ENCODE measurements at regions of chrX and their contacts with region 1.

Region 1: GRCh38 chrX:17689971-17690409 is 47.3 kb upstream of the SCML1 start:
- DNase-seq: peak; percentile 66
- H3K4me3 ChIP-seq: no peak overlapping the region
- H3K27ac ChIP-seq: no peak overlapping the region
- H3K4me1 ChIP-seq: peaks cover 2% of the 10 kb centered on the region
- H3K27me3 ChIP-seq: no peaks in the 10 kb centered on the region
- CTCF ChIP-seq: peak; percentile 38 to 49
- POLR2A ChIP-seq: no peak

Region 2: DNA sequence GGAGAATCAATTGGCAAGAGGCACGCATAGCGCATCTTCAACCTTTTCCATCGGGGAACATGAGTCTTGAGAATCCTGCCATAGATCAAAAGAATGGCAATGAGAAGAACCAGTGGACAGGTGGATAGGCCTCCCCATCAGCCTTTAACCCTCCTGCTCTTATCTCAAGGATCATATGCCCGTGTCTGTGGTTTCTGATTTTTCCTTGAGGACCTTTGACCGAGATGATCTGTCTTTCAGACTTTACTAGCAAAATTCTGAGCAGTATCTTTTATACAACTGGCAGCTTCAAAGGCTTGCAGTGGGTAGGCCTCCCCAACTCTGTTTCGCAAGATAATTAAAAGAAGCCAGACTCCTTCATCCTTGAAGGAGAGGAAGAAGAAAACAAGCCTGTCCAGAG is 569.2 kb before region 1 on chrX:
- CTCF ChIA-PET with region 1: no interaction called
- POLR2A ChIA-PET with region 1: no interaction called
- dilution Hi-C with region 1: no loop called
- intact Hi-C with region 1: loop called (anchors 10 kb)
- DNase-seq: no peak
- H3K4me3 ChIP-seq: no peak overlapping the region
- H3K27ac ChIP-seq: no peak overlapping the region
- H3K4me1 ChIP-seq: no peaks in the 10 kb centered on the region
- H3K27me3 ChIP-seq: no peaks in the 10 kb centered on the region
- CTCF ChIP-seq: no peak
- POLR2A ChIP-seq: no peak

Region 3: GRCh38 chrX:17242470-17242869 is 447.5 kb before region 1 on chrX:
- CTCF ChIA-PET with region 1: interaction called, 29 read pairs
- POLR2A ChIA-PET with region 1: no interaction called
- dilution Hi-C with region 1: no loop called
- intact Hi-C with region 1: loop called (anchors 1 kb)
- DNase-seq: peak; percentile 62
- H3K4me3 ChIP-seq: no peak overlapping the region
- H3K27ac ChIP-seq: no peak overlapping the region
- H3K4me1 ChIP-seq: no peaks in the 10 kb centered on the region
- H3K27me3 ChIP-seq: no peaks in the 10 kb centered on the region
- CTCF ChIP-seq: peak; percentile 36
- POLR2A ChIP-seq: no peak

Region 4: GRCh38 chrX:17374619-17375366 is 315.2 kb before region 1 on chrX and contains the start of gene NHS:
- CTCF ChIA-PET with region 1: no interaction called
- POLR2A ChIA-PET with region 1: no interaction called
- dilution Hi-C with region 1: no loop called
- intact Hi-C with region 1: loop called (anchors 1 kb)
- DNase-seq: peak; percentile 15
- H3K4me3 ChIP-seq: peak within 1 kb of the TSS in 1 of 3 experiments; percentile 30
- H3K27ac ChIP-seq: no peak within 1 kb of the TSS
- H3K4me1 ChIP-seq: no peaks in the 10 kb centered on the region
- H3K27me3 ChIP-seq: peaks cover 13 to 29% of the 10 kb centered on the region in 2 experiments
- CTCF ChIP-seq: peak in 1 of 2 donors; percentile 25
- POLR2A ChIP-seq: no peak
- total RNA-seq, gene NHS: 0.46 and 1.1 TPM in 2 replicates

Region 5: DNA sequence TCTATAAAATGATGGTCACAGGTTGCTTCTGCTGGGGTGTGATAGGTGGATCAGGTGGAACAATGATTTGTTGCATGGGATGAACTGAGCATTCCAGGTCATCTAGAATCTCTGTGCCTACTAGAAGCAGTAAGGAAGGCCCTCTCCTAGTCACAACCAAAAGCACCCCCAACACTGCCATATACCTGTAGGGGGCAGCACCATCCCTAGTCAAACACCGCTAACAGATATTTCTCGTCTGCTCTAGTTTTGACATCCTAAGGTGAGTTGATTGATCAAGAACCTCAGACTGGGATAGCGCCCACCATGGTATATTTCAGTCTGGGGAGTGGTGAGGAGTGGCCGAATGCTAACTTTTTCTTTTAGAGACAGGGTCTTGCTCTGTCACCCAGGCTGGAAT is 154.8 kb before region 1 on chrX:
- CTCF ChIA-PET with region 1: interaction called, 6 read pairs
- POLR2A ChIA-PET with region 1: no interaction called
- dilution Hi-C with region 1: no loop called
- intact Hi-C with region 1: loop called (anchors 1 kb)
- DNase-seq: peak; percentile 49
- H3K4me3 ChIP-seq: no peak overlapping the region
- H3K27ac ChIP-seq: no peak overlapping the region
- H3K4me1 ChIP-seq: no peaks in the 10 kb centered on the region
- H3K27me3 ChIP-seq: peaks cover 0 to 2% of the 10 kb centered on the region in 2 experiments
- CTCF ChIP-seq: peak; percentile 45 to 51
- POLR2A ChIP-seq: no peak

Region 6: DNA sequence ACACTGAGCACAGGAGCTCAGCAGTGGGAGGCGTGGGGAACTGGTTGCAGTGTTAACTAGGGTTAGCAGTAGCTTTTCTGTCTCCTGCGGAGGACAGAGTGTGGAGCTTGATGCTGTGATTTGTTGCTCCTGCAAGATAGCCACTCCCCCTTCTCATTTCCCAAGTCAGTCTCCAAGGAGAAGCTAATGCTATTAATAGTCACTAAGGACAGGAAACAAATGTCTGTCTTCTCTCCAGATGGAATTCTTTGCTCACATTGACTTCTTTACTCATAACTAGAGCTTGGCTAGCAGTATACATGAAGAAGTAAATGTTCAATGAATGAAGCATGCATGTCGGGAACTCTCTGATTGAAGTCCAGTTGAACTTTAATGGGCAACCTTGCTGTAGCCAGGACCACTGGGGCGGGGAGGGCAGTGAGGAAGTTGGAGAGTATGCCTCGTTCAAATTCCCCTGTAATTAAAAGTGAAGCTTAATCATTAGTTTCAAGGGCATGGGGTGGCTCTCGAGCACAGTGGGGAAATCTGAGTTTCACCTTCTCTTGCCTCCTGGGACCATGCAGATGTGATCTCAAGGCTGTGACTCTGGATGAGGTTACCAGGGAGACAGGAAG is 109.3 kb before region 1 on chrX:
- CTCF ChIA-PET with region 1: no interaction called
- POLR2A ChIA-PET with region 1: no interaction called
- dilution Hi-C with region 1: no loop called
- intact Hi-C with region 1: no loop called
- DNase-seq: peak; percentile 39
- H3K4me3 ChIP-seq: no peak overlapping the region
- H3K27ac ChIP-seq: no peak overlapping the region
- H3K4me1 ChIP-seq: peaks cover 7% of the 10 kb centered on the region
- H3K27me3 ChIP-seq: peaks cover 10 to 18% of the 10 kb centered on the region in 2 experiments
- CTCF ChIP-seq: no peak
- POLR2A ChIP-seq: no peak

Measured in endothelial cell of umbilical vein (primary cell).